CD8-positive, alpha-beta T cell (primary cell): ENCODE measurements at regions of chr1 and their contacts with region 1.

Region 1: DNA sequence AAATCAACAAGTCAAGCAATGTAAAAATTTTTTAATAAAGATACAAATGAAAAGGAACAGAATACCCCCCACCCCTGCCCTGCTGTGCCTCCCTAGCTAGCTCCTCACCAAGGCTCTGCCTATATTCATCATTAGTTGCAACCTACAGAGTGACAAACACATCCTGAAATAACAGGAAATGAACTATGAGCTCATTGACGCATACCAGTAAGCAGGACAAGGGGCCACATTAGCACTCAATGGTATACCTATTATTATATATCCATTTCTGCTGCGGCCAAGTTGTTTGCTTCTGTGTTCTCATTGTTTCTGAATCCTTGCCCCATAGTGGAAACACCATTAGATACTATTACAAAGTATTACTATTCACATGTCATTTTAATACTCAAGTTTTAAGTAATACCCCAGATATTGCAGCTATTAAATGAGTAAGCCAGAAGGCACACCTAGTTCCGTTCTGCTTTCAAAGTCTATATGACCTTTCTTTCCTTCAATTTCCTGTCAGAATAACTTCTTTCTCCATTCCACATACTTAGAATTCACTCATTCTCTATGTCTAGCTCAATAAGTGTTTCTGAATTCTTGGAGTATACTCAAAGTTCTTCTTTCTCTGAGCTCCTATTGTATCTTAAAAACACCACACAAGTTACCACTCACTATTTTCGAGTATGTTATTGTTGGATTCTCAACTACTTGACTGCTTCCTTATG is 1214.9 kb downstream of the PLA2G4A start:
- DNase-seq: no peak
- ATAC-seq: no peak
- H3K4me3 ChIP-seq: no peak overlapping the region
- H3K4me3 Mint-ChIP-seq: no peak overlapping the region
- H3K27ac ChIP-seq: no peak overlapping the region
- H3K27ac Mint-ChIP-seq: no peak overlapping the region
- H3K4me1 ChIP-seq: no peaks in the 10 kb centered on the region
- H3K4me1 Mint-ChIP-seq: no peaks in the 10 kb centered on the region
- H3K27me3 ChIP-seq: no peaks in the 10 kb centered on the region
- H3K27me3 Mint-ChIP-seq: no peaks in the 10 kb centered on the region
- CTCF ChIP-seq: no peak

Region 2: DNA sequence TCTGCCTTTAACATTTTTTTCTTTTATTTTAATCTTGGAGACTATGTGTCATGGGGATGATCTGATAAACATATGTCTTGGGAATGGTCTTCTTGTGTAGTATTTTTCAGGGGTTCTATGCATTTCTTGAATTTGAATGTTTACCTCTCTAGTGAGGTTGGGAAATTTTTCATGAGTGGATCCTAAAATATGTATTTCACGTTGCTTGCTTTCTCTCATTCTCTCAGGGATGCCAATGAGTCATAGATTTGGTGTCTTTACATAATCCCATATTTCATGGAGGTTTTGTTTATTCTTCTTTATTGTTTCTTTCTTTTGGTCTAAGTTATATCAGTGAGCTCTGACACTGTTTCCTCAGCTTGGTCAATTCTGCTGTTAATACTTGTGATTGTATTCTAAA is 22.2 kb after region 1 on chr1:
- CTCF ChIA-PET with region 1: no interaction called
- POLR2A ChIA-PET with region 1: no interaction called
- intact Hi-C with region 1: no loop called
- DNase-seq: no peak
- ATAC-seq: no peak
- H3K4me3 ChIP-seq: no peak overlapping the region
- H3K4me3 Mint-ChIP-seq: no peak overlapping the region
- H3K27ac ChIP-seq: no peak overlapping the region
- H3K27ac Mint-ChIP-seq: no peak overlapping the region
- H3K4me1 ChIP-seq: no peaks in the 10 kb centered on the region
- H3K4me1 Mint-ChIP-seq: no peaks in the 10 kb centered on the region
- H3K27me3 ChIP-seq: no peaks in the 10 kb centered on the region
- H3K27me3 Mint-ChIP-seq: no peaks in the 10 kb centered on the region
- CTCF ChIP-seq: no peak

Region 3: GRCh38 chr1:188154761-188155160 is 111.1 kb after region 1 on chr1:
- CTCF ChIA-PET with region 1: no interaction called
- POLR2A ChIA-PET with region 1: no interaction called
- intact Hi-C with region 1: loop called in 1 of 2 experiments (anchors 5 kb)
- DNase-seq: no peak
- ATAC-seq: no peak
- H3K4me3 ChIP-seq: no peak overlapping the region
- H3K4me3 Mint-ChIP-seq: no peak overlapping the region
- H3K27ac ChIP-seq: no peak overlapping the region
- H3K27ac Mint-ChIP-seq: no peak overlapping the region
- H3K4me1 ChIP-seq: no peaks in the 10 kb centered on the region
- H3K4me1 Mint-ChIP-seq: no peaks in the 10 kb centered on the region
- H3K27me3 ChIP-seq: no peaks in the 10 kb centered on the region
- H3K27me3 Mint-ChIP-seq: no peaks in the 10 kb centered on the region
- CTCF ChIP-seq: no peak

Region 4: GRCh38 chr1:188325211-188325610 is 281.5 kb after region 1 on chr1:
- CTCF ChIA-PET with region 1: no interaction called
- POLR2A ChIA-PET with region 1: no interaction called
- intact Hi-C with region 1: no loop called
- DNase-seq: no peak
- ATAC-seq: no peak
- H3K4me3 ChIP-seq: no peak overlapping the region
- H3K4me3 Mint-ChIP-seq: no peak overlapping the region
- H3K27ac ChIP-seq: no peak overlapping the region
- H3K27ac Mint-ChIP-seq: no peak overlapping the region
- H3K4me1 ChIP-seq: no peaks in the 10 kb centered on the region
- H3K4me1 Mint-ChIP-seq: no peaks in the 10 kb centered on the region
- H3K27me3 ChIP-seq: no peaks in the 10 kb centered on the region
- H3K27me3 Mint-ChIP-seq: no peaks in the 10 kb centered on the region
- CTCF ChIP-seq: no peak